Natural killer cell (primary cell): ENCODE measurements at regions of chr2 and their contacts with region 1.

Region 1: DNA sequence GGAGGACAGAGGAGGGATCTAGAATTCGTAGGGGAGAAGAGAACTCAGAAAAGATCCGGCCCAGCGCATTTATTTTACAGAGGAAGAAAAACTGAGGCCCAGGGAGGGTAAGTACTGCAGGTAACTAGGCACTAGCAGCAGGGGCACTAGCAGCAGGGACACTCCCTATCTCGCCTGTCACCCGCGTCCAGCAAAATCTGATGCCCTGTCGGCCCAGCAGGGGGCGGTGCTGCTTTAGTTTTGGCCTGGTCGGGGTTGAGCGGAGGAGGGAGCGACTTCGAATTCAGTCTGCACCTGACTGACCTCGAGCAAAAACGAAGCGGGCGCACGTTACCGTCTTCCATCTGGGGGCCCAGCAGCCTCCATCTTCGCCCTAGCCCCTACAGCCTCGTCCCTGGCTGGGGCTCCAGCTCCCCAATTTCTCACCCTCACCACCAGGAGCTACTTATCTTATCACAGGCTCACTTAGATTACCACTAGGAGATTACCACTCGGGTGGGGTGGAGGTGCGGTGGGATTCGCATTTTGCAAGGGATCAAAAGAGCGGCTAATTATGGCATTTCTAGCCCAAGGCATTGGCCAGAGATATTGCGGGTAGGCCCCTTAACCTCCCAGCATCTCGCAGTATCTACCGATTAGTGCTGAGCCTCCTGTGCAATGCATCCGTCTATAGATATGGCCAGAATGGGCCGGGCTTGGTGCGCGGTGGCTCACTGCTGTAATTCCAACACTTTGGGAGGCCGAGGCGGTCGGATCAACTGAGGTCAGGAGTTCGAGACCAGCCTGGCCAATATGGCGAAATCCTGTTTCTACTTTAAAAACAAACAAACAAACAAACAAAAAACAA is 17.8 kb upstream of the CD8A start:
- DNase-seq: peak; percentile 90 to 95
- ATAC-seq: peak; percentile 86 to 94 (median 88)
- H3K4me3 ChIP-seq: peak overlapping the region; percentile 50
- H3K4me3 Mint-ChIP-seq: peak overlapping the region; percentile 96
- H3K27ac ChIP-seq: peak overlapping the region; percentile 65
- H3K27ac Mint-ChIP-seq: peak overlapping the region; percentile 86 to 89
- H3K4me1 ChIP-seq: peaks cover 39% of the 10 kb centered on the region
- H3K4me1 Mint-ChIP-seq: peaks cover 26 to 37% of the 10 kb centered on the region in 2 donors
- H3K27me3 ChIP-seq: peaks cover 15% of the 10 kb centered on the region
- H3K27me3 Mint-ChIP-seq: peaks cover 0 to 41% of the 10 kb centered on the region in 2 donors
- CTCF ChIP-seq: peak; percentile 94

Region 2: GRCh38 chr2:86764661-86765307 is 43.8 kb before region 1 on chr2:
- intact Hi-C with region 1: loop called (anchors 1 kb)
- DNase-seq: peak in 1 of 2 donors; percentile 77
- ATAC-seq: peak; percentile 72 to 81 (median 81)
- H3K4me3 ChIP-seq: no peak overlapping the region
- H3K4me3 Mint-ChIP-seq: no peak overlapping the region
- H3K27ac ChIP-seq: no peak overlapping the region
- H3K27ac Mint-ChIP-seq: peak overlapping the region; percentile 56 to 59
- H3K4me1 ChIP-seq: no peaks in the 10 kb centered on the region
- H3K4me1 Mint-ChIP-seq: peaks cover 24 to 26% of the 10 kb centered on the region in 2 donors
- H3K27me3 ChIP-seq: no peaks in the 10 kb centered on the region
- H3K27me3 Mint-ChIP-seq: no peaks in the 10 kb centered on the region
- CTCF ChIP-seq: peak; percentile 86

Region 3: DNA sequence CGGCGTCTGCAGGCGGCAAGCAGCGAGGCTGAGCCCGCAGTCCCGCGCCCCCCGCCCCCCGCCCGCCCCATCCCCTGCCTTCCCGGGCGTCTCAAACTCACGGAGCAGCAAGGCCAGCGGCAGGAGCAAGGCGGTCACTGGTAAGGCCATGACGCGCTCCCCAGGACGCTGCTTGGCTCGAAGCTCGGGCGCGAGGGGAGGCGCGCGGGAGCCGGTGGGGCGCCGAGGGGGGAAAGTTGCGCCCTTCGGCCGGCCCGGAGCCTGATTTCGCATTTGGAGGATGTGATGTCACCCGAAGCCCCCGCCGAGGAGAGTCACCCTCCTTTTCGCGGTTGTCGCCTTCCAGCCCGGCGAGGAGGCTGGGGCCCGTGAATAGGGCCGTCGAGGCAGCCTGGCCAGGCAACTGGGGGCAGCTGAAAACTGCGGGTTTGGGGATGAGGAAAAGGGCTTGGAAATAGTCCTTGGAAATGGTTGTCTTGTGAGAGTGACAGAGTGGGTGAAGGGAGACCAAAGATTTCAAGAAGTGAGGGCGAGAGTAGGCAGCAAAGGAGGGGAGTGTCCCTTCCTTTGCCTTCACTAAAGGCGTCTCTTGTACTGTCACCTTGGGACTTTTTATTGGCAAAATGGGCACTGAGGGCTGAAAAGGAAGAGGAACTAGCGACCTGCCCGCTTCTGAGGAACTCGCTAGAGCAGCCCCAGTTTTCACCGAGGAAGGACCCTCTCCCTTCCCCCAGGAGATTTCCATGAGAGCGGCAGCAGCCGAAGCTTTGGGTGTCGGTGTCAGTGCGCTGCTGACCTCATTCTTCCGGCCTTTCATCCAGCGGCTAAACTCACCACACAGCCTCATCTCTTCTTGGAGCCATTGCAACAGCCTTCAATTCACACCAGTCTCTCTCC is 17.6 kb before region 1 on chr2 and contains the start of gene CD8A:
- intact Hi-C with region 1: loop called (anchors 1 kb)
- DNase-seq: peak; percentile 69 to 85
- ATAC-seq: peak; percentile 51 to 63 (median 52)
- H3K4me3 ChIP-seq: peak within 1 kb of the TSS; percentile 71
- H3K4me3 Mint-ChIP-seq: peak within 1 kb of the TSS; percentile 90
- H3K27ac ChIP-seq: peak within 1 kb of the TSS; percentile 88
- H3K27ac Mint-ChIP-seq: peak within 1 kb of the TSS; percentile 95 to 97
- H3K4me1 ChIP-seq: peaks cover 80% of the 10 kb centered on the region
- H3K4me1 Mint-ChIP-seq: peaks cover 62 to 74% of the 10 kb centered on the region in 2 donors
- H3K27me3 ChIP-seq: peaks cover 17% of the 10 kb centered on the region
- H3K27me3 Mint-ChIP-seq: peaks cover 0 to 11% of the 10 kb centered on the region in 2 donors
- CTCF ChIP-seq: no peak
- total RNA-seq, gene CD8A: 85.3 to 208 (median 162) TPM